CD4-positive, alpha-beta T cell (primary cell): ENCODE measurements at regions of chr2 and their contacts with region 1.

Region 1: GRCh38 chr2:215454519-215455246 is 18.8 kb upstream of the FN1 start:
- DNase-seq: peak in 4 of 14 experiments; percentile 4 to 51 (median 28)
- ATAC-seq: no peak
- H3K4me3 ChIP-seq: no peak overlapping the region
- H3K4me3 Mint-ChIP-seq: no peak overlapping the region
- H3K27ac ChIP-seq: no peak overlapping the region
- H3K27ac Mint-ChIP-seq: no peak overlapping the region
- H3K4me1 ChIP-seq: no peaks in the 10 kb centered on the region
- H3K4me1 Mint-ChIP-seq: no peaks in the 10 kb centered on the region
- H3K27me3 ChIP-seq: no peaks in the 10 kb centered on the region
- H3K27me3 Mint-ChIP-seq: peaks cover 10% of the 10 kb centered on the region
- CTCF ChIP-seq: peak; percentile 84

Region 2: GRCh38 chr2:215828517-215829184 is 374.0 kb after region 1 on chr2:
- CTCF ChIA-PET with region 1: interaction called, 3 read pairs
- POLR2A ChIA-PET with region 1: no interaction called
- intact Hi-C with region 1: loop called in 1 of 2 experiments (anchors 2 kb)
- DNase-seq: peak in 12 of 14 experiments; percentile 1 to 63 (median 15)
- ATAC-seq: peak; percentile 43
- H3K4me3 ChIP-seq: no peak overlapping the region
- H3K4me3 Mint-ChIP-seq: no peak overlapping the region
- H3K27ac ChIP-seq: no peak overlapping the region
- H3K27ac Mint-ChIP-seq: no peak overlapping the region
- H3K4me1 ChIP-seq: no peaks in the 10 kb centered on the region
- H3K4me1 Mint-ChIP-seq: no peaks in the 10 kb centered on the region
- H3K27me3 ChIP-seq: no peaks in the 10 kb centered on the region
- H3K27me3 Mint-ChIP-seq: no peaks in the 10 kb centered on the region
- CTCF ChIP-seq: peak; percentile 41

Region 3: DNA sequence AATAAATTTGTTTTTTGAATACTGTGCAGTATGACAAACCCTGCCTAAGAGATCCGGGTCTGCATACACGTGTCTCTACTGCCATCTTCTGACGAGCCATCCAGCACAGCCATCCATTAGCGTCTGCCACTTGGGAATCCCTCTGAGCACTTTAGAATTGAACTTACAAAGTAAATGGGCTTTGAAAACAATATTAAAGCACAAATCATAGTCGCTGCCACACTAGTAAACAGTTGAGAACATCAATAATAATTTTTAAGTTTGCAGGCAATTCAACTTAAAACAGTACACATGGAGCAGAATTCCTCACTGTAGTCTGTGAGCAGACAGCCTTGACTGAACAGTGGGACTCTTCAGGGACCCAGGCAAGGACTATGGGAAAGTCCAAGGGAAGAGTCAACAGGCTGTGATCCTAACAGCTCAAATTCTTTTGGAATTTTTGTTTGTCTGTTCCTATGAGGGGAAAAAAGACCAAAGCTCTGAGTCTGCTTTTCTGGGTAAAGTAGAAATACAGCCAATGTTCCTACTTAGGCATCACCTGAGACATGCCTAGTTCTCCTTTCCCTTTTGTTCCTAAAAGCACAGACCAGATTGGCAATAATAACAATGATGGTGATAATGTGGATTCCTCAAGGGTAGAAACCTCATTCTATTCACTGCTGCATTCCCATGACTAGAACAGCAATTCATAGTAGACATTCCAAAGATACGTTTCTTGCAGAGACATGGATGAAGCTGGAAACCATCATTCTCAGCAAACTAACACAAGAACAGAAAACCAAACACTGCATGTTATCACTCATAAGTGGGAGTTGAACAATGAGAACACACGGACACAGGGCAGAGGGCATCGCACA is 465.8 kb after region 1 on chr2:
- CTCF ChIA-PET with region 1: no interaction called
- POLR2A ChIA-PET with region 1: no interaction called
- intact Hi-C with region 1: loop called (anchors 1 kb)
- DNase-seq: peak; percentile 18 to 77 (median 42)
- ATAC-seq: peak; percentile 66
- H3K4me3 ChIP-seq: no peak overlapping the region
- H3K4me3 Mint-ChIP-seq: no peak overlapping the region
- H3K27ac ChIP-seq: no peak overlapping the region
- H3K27ac Mint-ChIP-seq: no peak overlapping the region
- H3K4me1 ChIP-seq: no peaks in the 10 kb centered on the region
- H3K4me1 Mint-ChIP-seq: no peaks in the 10 kb centered on the region
- H3K27me3 ChIP-seq: peaks cover 0 to 4% of the 10 kb centered on the region in 2 experiments
- H3K27me3 Mint-ChIP-seq: peaks cover 8% of the 10 kb centered on the region
- CTCF ChIP-seq: peak; percentile 72

Region 4: DNA sequence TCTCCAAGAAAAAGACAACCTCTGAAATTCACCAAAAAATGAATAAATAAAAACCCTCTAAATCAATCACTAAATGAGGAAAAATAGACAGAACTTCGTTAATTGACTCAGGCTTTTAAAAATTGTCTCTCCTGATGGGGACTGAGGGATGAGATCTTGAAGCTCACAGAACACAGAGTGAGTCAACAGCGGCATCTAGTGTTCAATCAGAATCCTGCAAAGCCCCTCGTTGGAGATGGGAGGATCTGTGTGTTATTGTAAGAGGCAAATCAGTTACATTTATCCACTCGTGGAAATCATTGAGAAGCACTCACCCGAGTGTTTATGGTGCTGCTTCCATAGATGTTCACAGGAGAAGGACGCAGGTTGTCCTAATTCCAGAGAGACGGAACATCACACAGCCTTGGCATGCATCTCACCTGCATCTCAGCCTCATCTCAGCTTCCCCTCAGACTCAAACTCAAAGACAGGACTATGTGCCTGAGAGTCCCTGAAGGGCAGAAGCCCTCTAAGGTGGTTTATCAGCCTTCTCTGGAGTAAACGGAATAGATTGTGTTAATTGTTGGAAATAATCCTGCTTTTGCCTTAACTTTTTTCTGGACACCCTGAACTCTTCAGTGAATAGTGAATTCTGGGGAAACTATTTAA is 476.7 kb after region 1 on chr2:
- CTCF ChIA-PET with region 1: no interaction called
- POLR2A ChIA-PET with region 1: no interaction called
- intact Hi-C with region 1: loop called in 1 of 2 experiments (anchors 5 kb)
- DNase-seq: peak; percentile 4 to 69 (median 30)
- ATAC-seq: peak; percentile 54
- H3K4me3 ChIP-seq: no peak overlapping the region
- H3K4me3 Mint-ChIP-seq: no peak overlapping the region
- H3K27ac ChIP-seq: no peak overlapping the region
- H3K27ac Mint-ChIP-seq: no peak overlapping the region
- H3K4me1 ChIP-seq: no peaks in the 10 kb centered on the region
- H3K4me1 Mint-ChIP-seq: no peaks in the 10 kb centered on the region
- H3K27me3 ChIP-seq: no peaks in the 10 kb centered on the region
- H3K27me3 Mint-ChIP-seq: peaks cover 8% of the 10 kb centered on the region
- CTCF ChIP-seq: peak; percentile 98